Cardiac septum (tissue), 1 donor: ENCODE measurements at regions of chr2 and their contacts with region 1.

Region 1: DNA sequence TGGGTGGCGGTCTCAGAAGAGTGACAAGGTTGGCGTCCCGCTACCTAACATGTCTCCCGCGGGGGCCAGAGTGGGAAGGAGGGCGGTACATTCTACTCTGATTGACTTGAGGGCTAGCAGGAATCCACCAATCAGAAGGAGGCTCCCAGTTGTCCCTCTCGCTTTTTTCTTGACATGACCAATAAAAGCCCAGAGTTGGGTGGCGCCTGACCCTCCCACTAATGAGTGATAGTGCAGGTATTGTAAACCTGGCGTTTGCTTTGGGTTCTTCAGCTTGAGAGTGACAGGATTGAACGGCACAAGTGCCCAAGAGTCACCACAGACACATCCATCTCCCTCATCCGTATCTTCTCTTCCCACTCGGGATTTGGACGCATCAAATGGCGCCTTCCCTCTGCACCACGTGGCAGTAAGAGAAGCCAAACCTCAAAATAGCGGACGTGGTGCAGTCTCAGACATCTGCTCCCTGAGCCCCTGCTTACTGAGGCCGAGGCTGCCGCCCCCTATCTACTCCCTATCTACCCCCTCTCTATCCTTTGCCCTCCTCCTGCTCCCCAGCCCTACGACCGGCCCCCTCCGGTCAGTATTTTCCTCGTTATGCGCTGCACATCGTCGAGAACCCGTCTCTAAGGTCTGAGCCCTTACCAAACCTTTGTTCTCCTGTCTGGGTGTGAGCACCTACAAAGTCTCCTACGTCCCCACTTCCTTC is 768 bp upstream of the FAM161A start:
- DNase-seq: peak; percentile 90

Region 2: DNA sequence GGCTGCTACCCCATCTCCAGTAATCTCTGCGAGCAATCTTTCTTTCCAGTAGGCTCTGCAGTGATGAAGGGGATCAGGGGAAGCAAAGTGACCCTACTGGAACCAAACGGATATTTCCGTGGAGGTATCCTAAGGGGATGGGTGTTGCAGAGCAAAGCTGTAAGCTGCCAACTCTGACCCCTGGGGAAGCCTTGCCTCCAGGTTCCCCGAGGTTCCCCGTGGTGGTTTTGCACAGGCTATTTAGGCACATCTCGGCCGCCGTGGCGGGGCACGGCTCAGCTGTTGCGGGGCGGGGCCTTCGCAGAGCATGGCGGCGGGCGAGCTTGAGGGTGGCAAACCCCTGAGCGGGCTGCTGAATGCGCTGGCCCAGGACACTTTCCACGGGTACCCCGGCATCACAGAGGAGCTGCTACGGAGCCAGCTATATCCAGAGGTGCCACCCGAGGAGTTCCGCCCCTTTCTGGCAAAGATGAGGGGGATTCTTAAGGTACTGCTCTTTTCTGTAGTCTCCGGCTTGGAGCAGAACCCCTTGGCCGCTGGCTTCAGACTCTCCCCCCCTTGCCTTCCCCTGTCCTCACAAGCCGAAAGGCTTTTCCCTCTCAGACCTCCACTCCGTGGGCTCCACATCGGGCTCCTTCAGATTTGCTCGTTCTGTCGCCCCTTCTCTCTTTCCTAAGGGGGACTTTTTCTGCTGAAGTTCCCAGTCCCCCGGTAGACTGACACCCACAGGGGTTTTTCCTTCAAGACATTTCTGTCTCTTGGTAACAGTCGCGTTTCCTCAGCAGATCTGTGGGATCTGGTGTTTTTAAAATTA is 51.0 kb after region 1 on chr2 and contains the start of gene COMMD1:
- intact Hi-C with region 1: loop called (anchors 2 kb)
- DNase-seq: peak; percentile 94
- total RNA-seq, gene COMMD1: 56.0 TPM